Right ventricle myocardium inferior (tissue), 1 donor: ENCODE measurements at regions of chr4 and their contacts with region 1.

Region 1: DNA sequence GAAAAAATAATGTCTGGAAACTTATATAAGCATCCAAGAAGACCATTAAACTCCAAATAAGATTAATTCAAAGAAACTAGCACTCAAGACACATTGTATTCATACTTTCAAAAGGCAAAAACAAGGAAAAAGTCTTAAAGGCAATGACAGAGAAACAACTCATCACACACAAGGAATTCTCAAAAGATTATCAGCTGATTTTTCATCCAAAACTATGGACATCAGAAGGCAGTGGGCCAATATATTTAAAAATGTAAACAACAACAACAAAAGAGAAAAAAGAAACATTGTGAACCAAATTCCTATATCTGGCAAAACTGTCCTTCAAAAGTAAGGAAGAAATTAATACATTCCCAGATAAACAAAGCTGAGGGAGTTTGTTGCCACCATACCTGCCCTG is 711.4 kb upstream of the GALNTL6 start:
- DNase-seq: no peak
- ATAC-seq: no peak

Region 2: GRCh38 chr4:170988446-170988845 is 113.4 kb before region 1 on chr4:
- intact Hi-C with region 1: no loop called
- DNase-seq: no peak
- ATAC-seq: no peak

Region 3: DNA sequence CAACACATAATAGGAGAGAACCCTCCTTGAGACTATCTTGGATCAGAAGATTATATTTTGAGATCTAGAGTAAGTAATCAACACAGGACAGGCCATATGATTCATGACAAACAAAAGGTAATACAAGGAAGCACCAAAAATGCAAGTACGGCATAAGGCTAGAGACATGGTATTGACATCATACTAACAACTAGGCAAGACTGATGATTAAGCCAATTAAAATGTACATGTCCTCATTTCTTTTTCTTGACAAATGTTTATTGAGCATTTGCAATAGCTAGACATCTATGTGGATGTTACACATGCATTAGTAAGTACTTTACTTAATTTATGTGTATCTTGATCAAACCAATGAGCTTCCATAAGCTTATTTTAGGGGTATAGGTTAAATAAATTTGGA is 15.6 kb after region 1 on chr4:
- intact Hi-C with region 1: loop called (anchors 1 kb)
- DNase-seq: no peak
- ATAC-seq: no peak